CD14-positive monocyte (primary cell): ENCODE measurements at regions of chr6 and their contacts with region 1.

Region 1: GRCh38 chr6:139375232-139376016 is 976 bp upstream of the CITED2 start:
- DNase-seq: peak; percentile 71 to 77 (median 77)
- H3K4me3 ChIP-seq: peak overlapping the region; percentile 74 to 95 (median 74)
- H3K4me3 Mint-ChIP-seq: peak overlapping the region; percentile 94 to 97
- H3K27ac ChIP-seq: peak overlapping the region; percentile 76 to 96
- H3K27ac Mint-ChIP-seq: peak overlapping the region; percentile 95 to 97 (median 96)
- H3K4me1 ChIP-seq: peaks cover 25 to 43% of the 10 kb centered on the region in 2 donors
- H3K4me1 Mint-ChIP-seq: peaks cover 47% of the 10 kb centered on the region
- H3K27me3 ChIP-seq: no peaks in the 10 kb centered on the region
- H3K27me3 Mint-ChIP-seq: peaks cover 0 to 3% (median 0%) of the 10 kb centered on the region in 3 donors
- CTCF ChIP-seq: no peak

Region 2: GRCh38 chr6:139080255-139080920 is 295.0 kb before region 1 on chr6:
- intact Hi-C with region 1: no loop called
- DNase-seq: no peak
- H3K4me3 ChIP-seq: no peak overlapping the region
- H3K4me3 Mint-ChIP-seq: no peak overlapping the region
- H3K27ac ChIP-seq: no peak overlapping the region
- H3K27ac Mint-ChIP-seq: no peak overlapping the region
- H3K4me1 ChIP-seq: no peaks in the 10 kb centered on the region
- H3K4me1 Mint-ChIP-seq: no peaks in the 10 kb centered on the region
- H3K27me3 ChIP-seq: no peaks in the 10 kb centered on the region
- H3K27me3 Mint-ChIP-seq: no peaks in the 10 kb centered on the region
- CTCF ChIP-seq: no peak

Region 3: GRCh38 chr6:139323511-139324300 is 51.7 kb before region 1 on chr6:
- intact Hi-C with region 1: loop called in 1 of 2 experiments (anchors 5 kb)
- DNase-seq: peak; percentile 88 to 94 (median 94)
- H3K4me3 ChIP-seq: peak overlapping the region; percentile 37 to 75 (median 63)
- H3K4me3 Mint-ChIP-seq: peak overlapping the region; percentile 77 to 84
- H3K27ac ChIP-seq: peak overlapping the region; percentile 93 to 98
- H3K27ac Mint-ChIP-seq: peak overlapping the region; percentile 94 to 99 (median 99)
- H3K4me1 ChIP-seq: peaks cover 51 to 54% of the 10 kb centered on the region in 2 donors
- H3K4me1 Mint-ChIP-seq: peaks cover 51% of the 10 kb centered on the region
- H3K27me3 ChIP-seq: no peaks in the 10 kb centered on the region
- H3K27me3 Mint-ChIP-seq: peaks cover 0 to 1% (median 0%) of the 10 kb centered on the region in 3 donors
- CTCF ChIP-seq: no peak

Region 4: DNA sequence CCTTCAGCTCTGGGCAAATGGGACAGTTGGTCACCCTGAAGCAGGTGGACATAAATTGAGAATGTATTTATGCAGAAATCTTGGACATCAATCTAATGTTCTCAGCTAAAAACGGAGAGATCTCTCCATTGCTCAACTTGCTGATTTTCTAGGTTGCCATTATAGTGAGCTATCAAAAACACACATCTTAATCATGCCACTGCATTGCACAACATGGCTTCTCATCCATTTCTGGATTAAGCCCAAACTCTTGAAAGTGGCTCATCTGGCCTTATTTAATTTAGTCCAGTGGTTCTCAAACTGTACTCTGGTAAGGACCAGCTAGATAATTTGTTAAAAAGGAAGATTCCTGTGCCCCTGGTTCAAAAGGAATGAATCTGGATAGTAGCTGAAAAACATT is 323.9 kb after region 1 on chr6:
- intact Hi-C with region 1: loop called in 1 of 2 experiments (anchors 5 kb)
- DNase-seq: peak; percentile 46 to 72 (median 61)
- H3K4me3 ChIP-seq: peak overlapping the region in 1 of 3 experiments; percentile 50
- H3K4me3 Mint-ChIP-seq: peak overlapping the region in 1 of 2 donors; percentile 15
- H3K27ac ChIP-seq: peak overlapping the region; percentile 44 to 81
- H3K27ac Mint-ChIP-seq: peak overlapping the region; percentile 47 to 91 (median 80)
- H3K4me1 ChIP-seq: peaks cover 39 to 53% of the 10 kb centered on the region in 2 donors
- H3K4me1 Mint-ChIP-seq: peaks cover 47% of the 10 kb centered on the region
- H3K27me3 ChIP-seq: no peaks in the 10 kb centered on the region
- H3K27me3 Mint-ChIP-seq: no peaks in the 10 kb centered on the region
- CTCF ChIP-seq: no peak

Region 5: DNA sequence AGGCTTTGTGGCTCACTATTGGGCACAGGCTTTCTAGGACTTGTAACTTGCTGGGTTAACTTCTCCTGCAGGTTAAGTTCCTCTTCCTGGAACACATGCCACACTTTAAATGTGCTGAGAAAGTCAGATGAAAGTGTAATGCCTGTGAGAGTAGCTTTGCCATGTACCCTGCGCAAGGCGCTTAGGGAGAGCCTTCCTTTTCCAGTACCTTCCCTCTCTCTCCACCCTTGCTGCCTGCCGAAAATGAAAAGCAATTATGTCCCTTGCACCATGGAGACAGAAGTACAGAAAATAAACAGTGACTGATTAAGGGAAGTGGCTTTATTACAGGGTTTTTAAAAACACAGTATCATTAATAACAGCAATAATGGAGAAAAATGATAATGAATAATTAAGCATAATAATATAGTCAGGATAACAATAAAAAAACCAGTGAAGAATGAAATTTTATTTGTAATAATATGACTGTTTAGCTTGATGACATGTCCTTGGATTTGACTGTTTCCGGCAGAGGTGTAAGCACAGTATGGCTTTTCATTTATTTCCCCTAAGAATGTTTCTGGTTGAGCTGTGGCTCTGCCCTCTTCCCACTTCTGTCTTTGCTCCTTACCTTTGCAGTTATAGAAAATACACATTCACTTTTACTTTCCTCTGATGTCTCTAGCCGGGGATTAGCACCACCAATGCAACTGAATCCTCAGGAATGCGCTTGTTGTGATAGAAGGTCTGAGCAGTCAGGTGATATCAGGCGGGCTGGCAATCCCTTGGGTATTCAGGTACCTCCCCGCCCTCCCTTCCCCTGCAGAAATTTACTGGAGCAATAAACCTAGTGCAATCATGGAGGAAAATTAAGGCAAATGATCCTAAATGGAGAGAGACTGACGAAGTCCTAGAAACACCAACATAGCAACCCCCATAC is 471.4 kb after region 1 on chr6:
- intact Hi-C with region 1: loop called in 1 of 2 experiments (anchors 10 kb)
- DNase-seq: peak; percentile 36 to 43 (median 42)
- H3K4me3 ChIP-seq: peak overlapping the region in 2 of 3 experiments; percentile 19 to 60
- H3K4me3 Mint-ChIP-seq: peak overlapping the region; percentile 25 to 87
- H3K27ac ChIP-seq: peak overlapping the region; percentile 36 to 82
- H3K27ac Mint-ChIP-seq: peak overlapping the region; percentile 88 to 95 (median 93)
- H3K4me1 ChIP-seq: peaks cover 28 to 40% of the 10 kb centered on the region in 2 donors
- H3K4me1 Mint-ChIP-seq: peaks cover 38% of the 10 kb centered on the region
- H3K27me3 ChIP-seq: no peaks in the 10 kb centered on the region
- H3K27me3 Mint-ChIP-seq: no peaks in the 10 kb centered on the region
- CTCF ChIP-seq: no peak

Region 6: DNA sequence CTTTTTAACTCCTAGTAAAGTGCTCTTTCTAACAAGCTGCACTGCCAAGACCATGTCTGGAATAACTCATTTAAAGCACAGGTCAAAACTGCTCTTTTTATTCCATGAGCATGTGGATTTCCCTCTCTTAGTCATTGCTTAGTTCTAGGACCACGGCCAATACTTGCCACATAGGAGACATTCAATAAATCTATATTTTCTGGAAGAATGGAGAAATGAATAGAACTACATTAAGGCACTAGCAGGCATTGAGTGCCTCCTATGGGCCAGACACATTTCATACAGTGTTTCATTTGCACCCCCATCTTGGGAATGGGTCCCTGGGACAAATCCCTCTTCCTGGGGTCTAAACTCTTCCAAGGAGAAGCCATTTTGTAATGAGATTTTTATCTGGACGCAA is 551.8 kb after region 1 on chr6:
- intact Hi-C with region 1: loop called in 1 of 2 experiments (anchors 10 kb)
- DNase-seq: peak in 2 of 3 donors; percentile 21 to 44
- H3K4me3 ChIP-seq: no peak overlapping the region
- H3K4me3 Mint-ChIP-seq: no peak overlapping the region
- H3K27ac ChIP-seq: no peak overlapping the region
- H3K27ac Mint-ChIP-seq: no peak overlapping the region
- H3K4me1 ChIP-seq: peaks cover 0 to 2% of the 10 kb centered on the region in 2 donors
- H3K4me1 Mint-ChIP-seq: peaks cover 19% of the 10 kb centered on the region
- H3K27me3 ChIP-seq: no peaks in the 10 kb centered on the region
- H3K27me3 Mint-ChIP-seq: no peaks in the 10 kb centered on the region
- CTCF ChIP-seq: peak; percentile 51